ENCODE measurements at regions of chr6 and their contacts with region 1.

Region 1: GRCh38 chr6:122129313-122130025 is 270.0 kb upstream of the HSF2 start:
- DNase-seq: no peak
- ATAC-seq: peak; percentile 35 to 50

Region 2: DNA sequence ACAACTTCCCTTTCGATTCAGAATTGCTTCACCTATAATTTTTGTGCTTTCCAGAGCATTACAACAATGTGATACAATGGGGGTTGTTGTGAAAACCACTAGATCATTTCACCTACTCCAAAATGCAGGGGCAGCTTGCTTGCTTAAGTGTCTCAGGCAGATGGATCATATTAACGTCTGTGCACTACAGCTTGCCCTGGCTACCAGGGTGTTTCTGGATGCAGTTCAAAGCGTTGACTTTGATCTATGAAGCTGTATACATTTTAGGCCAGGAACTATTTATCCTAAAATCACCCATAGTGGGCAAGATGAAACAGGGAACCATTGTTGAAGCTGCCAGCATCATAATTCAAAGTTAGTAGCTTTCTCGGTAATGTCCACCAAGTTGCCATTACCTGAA is 69.6 kb before region 1 on chr6:
- intact Hi-C with region 1: loop called (anchors 5 to 10 kb)
- DNase-seq: no peak
- ATAC-seq: no peak

Region 3: GRCh38 chr6:122068291-122068769 is 61.1 kb before region 1 on chr6:
- intact Hi-C with region 1: loop called in 1 of 2 experiments (anchors 5 kb)
- DNase-seq: no peak
- ATAC-seq: peak; percentile 72